MCF 10A (cell line): ENCODE measurements at regions of chr12 and their contacts with region 1.

Region 1: GRCh38 chr12:47904713-47905310 is at the start of gene VDR:
- DNase-seq: peak; percentile 90
- H3K4me3 Mint-ChIP-seq: peak within 1 kb of the TSS; percentile 93
- H3K27ac Mint-ChIP-seq: peak within 1 kb of the TSS; percentile 82
- H3K4me1 Mint-ChIP-seq: peaks cover 37% of the 10 kb centered on the region
- H3K27me3 Mint-ChIP-seq: no peaks in the 10 kb centered on the region
- CTCF ChIP-seq: no peak
- total RNA-seq, gene VDR: 22.3 and 23.4 TPM in 2 replicates

Region 2: DNA sequence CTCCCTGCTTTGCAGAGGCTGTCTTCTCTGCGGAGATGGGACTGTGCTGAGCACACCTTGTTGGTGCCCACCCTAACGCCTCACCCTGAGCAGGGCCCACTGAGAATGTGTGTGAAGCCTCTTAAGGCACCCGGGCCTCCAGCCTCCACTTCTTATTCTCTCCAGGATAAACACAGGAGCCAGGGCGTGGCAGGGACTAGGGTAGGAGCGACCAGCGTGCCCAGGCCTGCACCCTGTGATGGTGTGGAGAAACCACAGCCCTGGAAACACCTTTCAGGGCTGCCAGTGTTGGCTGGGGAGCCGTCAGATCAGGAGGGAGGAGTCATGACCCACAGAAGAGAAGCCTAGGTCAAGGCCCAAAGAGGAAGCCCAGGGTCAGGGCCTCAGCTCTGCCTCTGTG is 41.3 kb before region 1 on chr12:
- CTCF ChIA-PET with region 1: interaction called, 4 read pairs
- POLR2A ChIA-PET with region 1: interaction called, 46 read pairs
- intact Hi-C with region 1: loop called (anchors 5 kb)
- DNase-seq: peak; percentile 93
- H3K4me3 Mint-ChIP-seq: no peak overlapping the region
- H3K27ac Mint-ChIP-seq: peak overlapping the region; percentile 81
- H3K4me1 Mint-ChIP-seq: peaks cover 53% of the 10 kb centered on the region
- H3K27me3 Mint-ChIP-seq: no peaks in the 10 kb centered on the region
- CTCF ChIP-seq: no peak

Region 3: DNA sequence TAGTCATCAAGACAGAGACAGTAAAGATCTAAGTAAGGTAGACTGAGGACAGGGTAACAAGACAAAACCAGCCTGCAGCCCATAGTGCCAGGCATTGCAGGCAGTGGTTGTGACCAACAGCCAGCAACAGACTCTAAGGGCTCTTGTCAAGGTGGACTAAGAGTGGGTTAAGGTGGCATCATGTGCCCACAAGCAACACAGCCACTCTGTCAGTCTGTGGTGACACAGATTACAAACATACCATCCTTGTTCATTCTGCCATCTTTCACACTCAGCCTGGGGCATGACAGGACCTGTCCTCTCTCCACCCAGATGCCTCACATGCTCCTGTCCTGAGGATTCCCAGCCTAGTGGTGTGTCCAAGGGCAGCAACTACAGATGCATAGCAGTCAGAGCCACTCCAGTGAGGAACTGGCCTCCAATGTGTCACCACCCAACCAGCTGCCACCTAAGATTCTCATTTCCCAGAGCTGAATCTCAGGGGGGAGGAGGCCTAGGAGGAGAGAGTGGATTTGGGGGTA is 28.3 kb before region 1 on chr12:
- CTCF ChIA-PET with region 1: interaction called, 7 read pairs
- POLR2A ChIA-PET with region 1: interaction called, 13 read pairs
- intact Hi-C with region 1: no loop called
- DNase-seq: peak; percentile 52
- H3K4me3 Mint-ChIP-seq: no peak overlapping the region
- H3K27ac Mint-ChIP-seq: peak overlapping the region; percentile 33
- H3K4me1 Mint-ChIP-seq: peaks cover 23% of the 10 kb centered on the region
- H3K27me3 Mint-ChIP-seq: no peaks in the 10 kb centered on the region
- CTCF ChIP-seq: no peak

Region 4: DNA sequence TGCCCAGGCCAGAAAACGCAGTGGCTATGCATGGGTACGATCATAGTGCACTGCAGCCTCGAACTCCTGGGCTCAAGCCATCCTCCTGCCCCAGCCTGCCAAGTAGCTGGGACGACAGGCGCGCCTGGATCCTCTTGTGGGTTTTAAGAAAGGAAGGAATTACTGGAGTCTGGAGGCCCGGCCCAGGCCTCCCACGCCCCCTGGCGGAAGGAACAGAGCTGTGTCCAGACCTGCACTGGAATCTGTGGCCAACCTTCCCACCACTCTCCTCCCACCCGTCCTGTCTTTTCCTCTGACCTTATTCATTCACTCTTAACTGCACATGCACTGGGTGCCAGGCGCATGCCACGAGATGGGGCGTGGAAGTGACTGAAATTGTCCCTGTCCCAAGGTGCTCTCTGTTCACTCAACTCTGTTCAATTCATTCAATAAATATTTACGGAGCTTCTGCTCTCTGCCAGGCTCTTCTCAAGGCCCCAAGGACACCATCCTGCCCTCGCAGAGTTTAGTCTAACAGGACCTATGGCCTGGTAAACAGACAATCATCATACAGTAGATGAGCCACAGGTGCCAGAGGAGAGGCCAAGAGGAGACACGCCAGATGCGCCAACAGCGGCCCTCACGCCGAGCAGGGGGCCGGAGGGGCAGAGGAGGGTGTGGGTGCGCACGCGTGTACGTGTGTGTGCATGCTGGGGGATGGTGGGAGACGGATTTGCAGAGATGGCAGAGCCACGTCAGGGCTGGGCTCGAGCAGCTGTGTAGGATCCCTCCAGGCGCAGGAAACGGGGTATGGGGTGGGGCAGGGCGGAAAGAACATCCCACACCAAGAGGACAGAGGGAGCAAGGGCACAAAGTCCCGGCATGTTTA is 44.9 kb after region 1 on chr12:
- CTCF ChIA-PET with region 1: interaction called, 50 read pairs
- POLR2A ChIA-PET with region 1: interaction called, 25 read pairs
- intact Hi-C with region 1: loop called (anchors 1 kb)
- DNase-seq: peak; percentile 88
- H3K4me3 Mint-ChIP-seq: no peak overlapping the region
- H3K27ac Mint-ChIP-seq: no peak overlapping the region
- H3K4me1 Mint-ChIP-seq: peaks cover 45% of the 10 kb centered on the region
- H3K27me3 Mint-ChIP-seq: no peaks in the 10 kb centered on the region
- CTCF ChIP-seq: peak; percentile 82

Region 5: GRCh38 chr12:48078901-48079300 is 174.1 kb after region 1 on chr12:
- CTCF ChIA-PET with region 1: no interaction called
- POLR2A ChIA-PET with region 1: interaction called, 3 read pairs
- intact Hi-C with region 1: loop called (anchors 10 kb)
- DNase-seq: peak; percentile 64
- H3K4me3 Mint-ChIP-seq: no peak overlapping the region
- H3K27ac Mint-ChIP-seq: peak overlapping the region; percentile 69
- H3K4me1 Mint-ChIP-seq: no peaks in the 10 kb centered on the region
- H3K27me3 Mint-ChIP-seq: no peaks in the 10 kb centered on the region
- CTCF ChIP-seq: no peak